WTC11 (cell line): ENCODE measurements at regions of chr20 and their contacts with region 1.

Region 1: GRCh38 chr20:62427172-62428001 is at the start of gene RBBP8NL:
- DNase-seq: peak; percentile 86
- ATAC-seq: peak; percentile 68
- H3K4me3 Mint-ChIP-seq: no peak within 1 kb of the TSS; the same call in 1 of the 2 replicates
- H3K27ac Mint-ChIP-seq: peak within 1 kb of the TSS; percentile 63
- H3K4me1 Mint-ChIP-seq: peaks cover 41% of the 10 kb centered on the region
- H3K27me3 Mint-ChIP-seq: no peaks in the 10 kb centered on the region; the same call in 1 of the 2 replicates
- CTCF ChIP-seq: no peak
- total RNA-seq, gene RBBP8NL: 0.99 to 1.5 TPM (median 1.4 TPM) in 3 replicates

Region 2: GRCh38 chr20:62409931-62410745 is 17.2 kb before region 1 on chr20:
- CTCF ChIA-PET with region 1: interaction called, 27 read pairs
- POLR2A ChIA-PET with region 1: no interaction called
- DNase-seq: peak; percentile 76
- ATAC-seq: peak; percentile 29
- H3K4me3 Mint-ChIP-seq: no peak overlapping the region
- H3K27ac Mint-ChIP-seq: no peak overlapping the region
- H3K4me1 Mint-ChIP-seq: peaks cover 9% of the 10 kb centered on the region
- H3K27me3 Mint-ChIP-seq: peaks cover 5% of the 10 kb centered on the region
- CTCF ChIP-seq: peak; percentile 54; the same call in 1 of the 2 replicates

Region 3: GRCh38 chr20:62437927-62438326 is 10.5 kb after region 1 on chr20:
- CTCF ChIA-PET with region 1: interaction called, 10 read pairs
- POLR2A ChIA-PET with region 1: no interaction called
- DNase-seq: peak; percentile 31
- ATAC-seq: peak; percentile 58
- H3K4me3 Mint-ChIP-seq: no peak overlapping the region
- H3K27ac Mint-ChIP-seq: peak overlapping the region; percentile 69
- H3K4me1 Mint-ChIP-seq: no peaks in the 10 kb centered on the region
- H3K27me3 Mint-ChIP-seq: no peaks in the 10 kb centered on the region; the same call in none of the 2 replicates
- CTCF ChIP-seq: no peak

Region 4: GRCh38 chr20:62464425-62464770 is 37.0 kb after region 1 on chr20:
- CTCF ChIA-PET with region 1: interaction called, 10 read pairs
- POLR2A ChIA-PET with region 1: no interaction called
- DNase-seq: no peak
- ATAC-seq: no peak
- H3K4me3 Mint-ChIP-seq: no peak overlapping the region
- H3K27ac Mint-ChIP-seq: no peak overlapping the region; the same call in 1 of the 2 replicates
- H3K4me1 Mint-ChIP-seq: no peaks in the 10 kb centered on the region
- H3K27me3 Mint-ChIP-seq: no peaks in the 10 kb centered on the region
- CTCF ChIP-seq: no peak